Calu3 (cell line): ENCODE measurements at regions of chr6 and their contacts with region 1.

Region 1: DNA sequence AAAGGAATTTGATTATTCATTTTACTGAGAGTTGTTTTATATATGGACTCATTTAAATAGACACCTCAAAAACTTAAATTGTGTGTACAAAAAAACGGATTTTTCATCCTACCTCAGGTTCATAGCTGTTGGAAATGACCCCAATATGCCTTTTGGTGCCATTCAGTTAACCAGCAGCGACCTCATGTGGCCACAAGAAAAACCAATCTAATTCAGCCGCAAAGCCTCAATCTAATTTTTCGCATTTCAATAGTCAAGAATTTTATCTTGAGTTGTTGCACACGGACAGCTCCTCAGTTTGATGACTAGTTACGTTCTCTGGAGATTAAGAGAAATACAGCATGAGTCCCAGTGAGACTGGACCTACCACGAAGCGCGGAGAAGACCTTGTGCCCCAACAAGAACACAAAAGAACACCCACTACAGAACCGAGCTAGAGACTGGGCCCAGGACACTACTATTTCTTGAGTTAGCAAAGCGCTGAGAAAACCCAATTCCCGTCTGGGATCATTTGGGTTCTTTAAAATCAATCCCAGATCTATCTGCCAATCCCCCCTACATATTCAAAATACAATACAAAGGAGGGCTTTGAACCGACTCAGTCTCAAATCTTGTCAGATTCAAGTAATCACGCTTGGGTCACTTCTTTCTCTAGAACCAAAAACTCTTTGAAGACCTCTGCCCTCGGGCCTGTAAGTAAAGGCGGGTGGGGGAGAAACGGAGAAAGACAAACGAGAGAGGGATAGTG is 1.1 kb downstream of the TCP11 start:
- DNase-seq: peak; percentile 73
- H3K4me3 Mint-ChIP-seq: no peak overlapping the region
- H3K27ac Mint-ChIP-seq: no peak overlapping the region
- H3K4me1 Mint-ChIP-seq: peaks cover 40% of the 10 kb centered on the region
- H3K27me3 Mint-ChIP-seq: no peaks in the 10 kb centered on the region
- CTCF ChIP-seq: peak; percentile 88

Region 2: DNA sequence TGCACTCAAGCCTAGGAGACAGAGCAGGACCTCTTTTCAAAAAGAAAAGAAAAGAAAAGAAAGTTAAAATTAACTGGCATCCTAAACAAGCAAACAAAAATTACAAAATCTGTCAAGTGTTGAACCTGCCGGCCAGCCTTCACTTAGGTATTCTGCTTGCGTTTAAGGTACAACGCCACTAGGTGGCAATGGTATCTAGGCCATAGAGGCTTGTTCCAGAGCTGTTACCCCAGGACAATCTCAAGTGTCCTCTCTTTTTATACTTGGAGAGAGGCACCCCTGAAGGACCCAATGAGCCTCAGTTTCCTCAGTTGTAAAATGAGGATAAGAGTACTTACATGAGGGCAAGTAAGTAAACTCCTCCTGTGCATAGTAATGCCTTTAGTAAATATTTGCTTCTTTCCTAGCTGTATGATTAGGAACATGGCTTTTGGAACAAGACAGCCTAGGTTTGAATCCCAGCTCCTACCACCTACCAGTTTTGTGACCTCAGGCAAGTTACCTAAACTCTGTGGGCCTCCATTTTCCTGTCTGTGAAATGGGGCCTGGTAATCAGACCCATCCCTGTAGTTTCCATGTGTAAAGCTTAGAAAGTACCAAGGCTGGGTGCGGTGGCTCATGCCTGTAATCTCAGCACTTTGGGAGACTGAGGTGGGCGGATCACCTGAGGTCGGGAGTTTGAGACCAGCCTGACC is 680.0 kb before region 1 on chr6:
- CTCF ChIA-PET with region 1: interaction called, 6 read pairs
- intact Hi-C with region 1: loop called (anchors 10 kb)
- DNase-seq: peak; percentile 78
- H3K4me3 Mint-ChIP-seq: no peak overlapping the region
- H3K27ac Mint-ChIP-seq: no peak overlapping the region
- H3K4me1 Mint-ChIP-seq: peaks cover 15% of the 10 kb centered on the region
- H3K27me3 Mint-ChIP-seq: peaks cover 35% of the 10 kb centered on the region
- CTCF ChIP-seq: peak; percentile 92

Region 3: GRCh38 chr6:34887753-34888513 is 252.1 kb before region 1 on chr6 and contains the start of gene TAF11:
- CTCF ChIA-PET with region 1: interaction called, 3 read pairs
- intact Hi-C with region 1: loop called (anchors 10 kb)
- DNase-seq: peak; percentile 97
- H3K4me3 Mint-ChIP-seq: peak within 1 kb of the TSS; percentile 99
- H3K27ac Mint-ChIP-seq: peak within 1 kb of the TSS; percentile 96
- H3K4me1 Mint-ChIP-seq: peaks cover 35% of the 10 kb centered on the region
- H3K27me3 Mint-ChIP-seq: no peaks in the 10 kb centered on the region
- CTCF ChIP-seq: no peak
- total RNA-seq, gene TAF11: 42.9 and 44.3 TPM in 2 replicates

Region 4: GRCh38 chr6:35096129-35096862 is 43.8 kb before region 1 on chr6:
- CTCF ChIA-PET with region 1: interaction called, 3 read pairs
- intact Hi-C with region 1: loop called (anchors 2 kb)
- DNase-seq: no peak
- H3K4me3 Mint-ChIP-seq: no peak overlapping the region
- H3K27ac Mint-ChIP-seq: peak overlapping the region; percentile 22
- H3K4me1 Mint-ChIP-seq: peaks cover 21% of the 10 kb centered on the region
- H3K27me3 Mint-ChIP-seq: no peaks in the 10 kb centered on the region
- CTCF ChIP-seq: no peak

Region 5: GRCh38 chr6:35195120-35195780 is 55.2 kb after region 1 on chr6:
- CTCF ChIA-PET with region 1: no interaction called
- intact Hi-C with region 1: no loop called
- DNase-seq: no peak
- H3K4me3 Mint-ChIP-seq: no peak overlapping the region
- H3K27ac Mint-ChIP-seq: no peak overlapping the region
- H3K4me1 Mint-ChIP-seq: peaks cover 22% of the 10 kb centered on the region
- H3K27me3 Mint-ChIP-seq: no peaks in the 10 kb centered on the region
- CTCF ChIP-seq: no peak

Region 6: GRCh38 chr6:35213824-35214756 is 74.0 kb after region 1 on chr6 and contains the start of gene SCUBE3:
- CTCF ChIA-PET with region 1: no interaction called
- intact Hi-C with region 1: no loop called
- DNase-seq: peak; percentile 51
- H3K4me3 Mint-ChIP-seq: peak within 1 kb of the TSS; percentile 62
- H3K27ac Mint-ChIP-seq: no peak within 1 kb of the TSS
- H3K4me1 Mint-ChIP-seq: peaks cover 20% of the 10 kb centered on the region
- H3K27me3 Mint-ChIP-seq: peaks cover 92% of the 10 kb centered on the region
- CTCF ChIP-seq: no peak
- total RNA-seq, gene SCUBE3: 0.44 and 0.47 TPM in 2 replicates

Region 7: GRCh38 chr6:35359751-35360348 is 219.8 kb after region 1 on chr6:
- CTCF ChIA-PET with region 1: no interaction called
- intact Hi-C with region 1: no loop called
- DNase-seq: peak; percentile 10
- H3K4me3 Mint-ChIP-seq: no peak overlapping the region
- H3K27ac Mint-ChIP-seq: peak overlapping the region; percentile 12
- H3K4me1 Mint-ChIP-seq: peaks cover 21% of the 10 kb centered on the region
- H3K27me3 Mint-ChIP-seq: no peaks in the 10 kb centered on the region
- CTCF ChIP-seq: no peak